Head of caudate nucleus (tissue), 42 donors: ENCODE measurements at regions of chr14 and their contacts with region 1.

Region 1: GRCh38 chr14:22653012-22653621 is 9.0 kb upstream of the OR6J1 start:
- DNase-seq: peak in 39 of 42 donors; percentile 18 to 79 (median 48)

Region 2: GRCh38 chr14:22570132-22570949 is 82.8 kb before region 1 on chr14:
- intact Hi-C with region 1: loop called (anchors 5 kb)
- DNase-seq: peak in 40 of 42 donors; percentile 39 to 92 (median 77)